ENCODE measurements at regions of chr10 and their contacts with region 1.

Region 1: GRCh38 chr10:78657163-78657861 is 411.5 kb upstream of the ZMIZ1 start:
- DNase-seq: peak; percentile 72 to 78 (median 74)
- ATAC-seq: peak; percentile 99
- H3K4me3 ChIP-seq: no peak overlapping the region
- H3K27ac ChIP-seq: no peak overlapping the region
- H3K4me1 ChIP-seq: peaks cover 0 to 5% of the 10 kb centered on the region in 2 experiments; a peak in 1 of 5 replicates
- H3K27me3 ChIP-seq: peaks cover 2 to 15% of the 10 kb centered on the region in 2 experiments; a peak in 3 of 5 replicates
- CTCF ChIP-seq: peak; percentile 79 to 81 (median 81)
- EP300 ChIP-seq: no peak
- POLR2A ChIP-seq: no peak
- RAD21 ChIP-seq: peak in 1 of 2 experiments; percentile 72; a peak in 2 of 4 replicates

Region 2: DNA sequence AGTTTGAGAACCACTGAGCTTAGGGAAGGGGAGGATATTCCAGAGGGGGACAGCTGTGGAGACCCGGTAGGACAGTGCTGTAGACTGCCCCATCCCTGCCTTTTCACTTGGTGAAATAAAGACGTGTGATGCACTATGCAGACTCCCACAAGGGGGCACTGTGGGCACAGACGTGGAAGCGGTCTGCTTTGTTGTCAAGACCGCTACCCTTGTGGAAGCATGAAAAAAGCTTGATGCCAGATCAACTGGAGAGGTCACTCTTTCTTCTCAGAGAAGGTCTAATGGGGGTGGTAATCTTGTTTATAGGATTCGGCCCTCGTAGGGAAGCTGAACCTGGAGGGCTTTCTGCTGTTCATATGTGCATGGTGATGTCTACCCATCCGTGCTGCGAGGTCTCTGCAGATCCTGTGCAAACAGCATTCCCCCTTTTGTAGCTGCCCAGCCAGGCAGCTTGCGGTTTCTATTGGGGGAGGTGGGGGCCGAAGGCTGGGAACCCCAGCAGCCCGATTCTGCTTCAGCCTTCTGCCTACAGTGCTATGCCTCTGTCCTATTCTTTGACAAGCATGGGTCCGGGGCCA is 609.9 kb before region 1 on chr10:
- CTCF ChIA-PET with region 1: no interaction called
- POLR2A ChIA-PET with region 1: no interaction called
- in situ Hi-C with region 1: no loop called
- intact Hi-C with region 1: loop called (anchors 5 kb)
- DNase-seq: peak; percentile 75 to 88 (median 77)
- ATAC-seq: peak; percentile 83
- H3K4me3 ChIP-seq: no peak overlapping the region
- H3K27ac ChIP-seq: no peak overlapping the region
- H3K4me1 ChIP-seq: peaks cover 0 to 17% of the 10 kb centered on the region in 2 experiments; a peak in 2 of 5 replicates
- H3K27me3 ChIP-seq: peaks cover 0 to under 1% of the 10 kb centered on the region in 2 experiments; a peak in 2 of 5 replicates
- CTCF ChIP-seq: peak; percentile 95 to 98 (median 95)
- EP300 ChIP-seq: no peak
- POLR2A ChIP-seq: no peak
- RAD21 ChIP-seq: peak; percentile 89 to 95

Region 3: DNA sequence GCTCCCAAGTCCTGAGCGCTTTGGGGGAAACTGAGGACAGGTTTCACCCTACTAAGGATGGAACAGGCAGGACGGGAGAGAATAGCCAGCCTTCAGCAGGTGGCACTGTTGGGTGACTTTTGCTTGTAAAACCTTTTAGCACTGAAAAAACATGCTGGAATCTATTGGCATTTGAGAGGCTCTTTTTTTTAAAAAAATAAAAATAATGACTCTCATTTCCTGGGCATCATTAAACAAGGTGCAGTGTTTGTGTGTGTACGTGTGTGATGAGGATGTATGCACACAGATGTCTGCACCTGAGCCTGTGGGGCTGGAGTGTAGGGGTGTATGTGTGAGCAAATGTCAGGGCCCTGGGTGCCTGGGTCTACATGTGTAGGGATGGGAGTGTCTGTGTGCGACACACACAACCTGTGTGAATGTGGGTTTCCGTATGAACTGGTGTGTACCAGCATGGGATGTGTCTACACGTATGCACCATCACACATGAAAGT is 445.7 kb before region 1 on chr10:
- CTCF ChIA-PET with region 1: no interaction called
- POLR2A ChIA-PET with region 1: no interaction called
- in situ Hi-C with region 1: no loop called
- intact Hi-C with region 1: loop called (anchors 10 kb)
- DNase-seq: peak in 1 of 4 experiments; percentile 23
- ATAC-seq: no peak
- H3K4me3 ChIP-seq: no peak overlapping the region
- H3K27ac ChIP-seq: no peak overlapping the region
- H3K4me1 ChIP-seq: no peaks in the 10 kb centered on the region
- H3K27me3 ChIP-seq: peaks cover 6 to 34% of the 10 kb centered on the region in 2 experiments; a peak in 3 of 5 replicates
- CTCF ChIP-seq: peak in 2 of 3 experiments; percentile 53 to 63; a peak in 4 of 6 replicates
- EP300 ChIP-seq: no peak
- POLR2A ChIP-seq: no peak
- RAD21 ChIP-seq: peak; percentile 69 to 70

Region 4: DNA sequence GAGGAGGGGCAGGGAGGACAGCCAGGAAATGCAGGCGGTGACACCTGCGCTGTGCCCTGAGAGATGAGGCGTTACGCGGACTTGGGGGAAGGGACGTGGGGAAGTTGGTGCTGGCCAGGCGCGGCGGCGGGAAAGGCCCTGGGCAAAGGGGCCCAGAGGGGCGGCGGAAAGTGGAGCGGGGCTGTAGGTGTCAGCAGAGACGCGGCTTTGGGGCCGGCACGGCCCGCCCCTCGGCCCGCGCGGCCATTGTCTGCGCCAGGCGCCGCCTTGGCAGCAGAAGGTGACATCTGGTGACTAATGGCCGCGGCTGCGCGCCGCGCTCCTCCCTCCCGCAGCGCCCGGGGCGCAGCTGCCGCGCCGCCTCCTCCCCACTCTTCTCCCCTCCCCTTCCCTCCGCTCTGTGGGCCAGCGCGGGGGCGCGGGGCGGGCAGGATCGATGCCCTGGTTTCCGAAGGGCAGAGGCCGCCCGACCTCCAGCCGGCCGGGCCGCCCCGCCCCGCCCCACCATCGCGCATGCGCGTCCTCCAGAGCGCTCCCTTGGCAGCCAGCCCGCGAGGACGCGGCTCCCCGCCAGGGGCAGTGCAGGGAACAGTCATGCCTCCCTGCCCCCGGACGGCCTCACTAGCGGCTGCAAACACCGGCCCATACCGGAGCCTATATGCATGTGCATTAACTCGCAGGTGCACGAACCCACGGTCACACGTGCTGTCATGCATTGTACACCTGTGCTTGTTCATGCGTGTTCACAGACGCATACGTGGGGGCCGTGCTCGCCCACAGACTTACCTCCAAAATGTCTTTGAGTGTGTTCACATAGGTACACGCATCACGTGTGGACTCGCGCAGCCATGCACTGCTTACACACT is 354.1 kb before region 1 on chr10:
- CTCF ChIA-PET with region 1: no interaction called
- POLR2A ChIA-PET with region 1: no interaction called
- in situ Hi-C with region 1: no loop called
- intact Hi-C with region 1: loop called (anchors 10 kb)
- DNase-seq: peak; percentile 95 to 100 (median 100)
- ATAC-seq: peak; percentile 97
- H3K4me3 ChIP-seq: peak overlapping the region; percentile 58
- H3K27ac ChIP-seq: peak overlapping the region; percentile 39; the same call in 2 of the 3 replicates
- H3K4me1 ChIP-seq: peaks cover 5 to 13% of the 10 kb centered on the region in 2 experiments; a peak in 4 of 5 replicates
- H3K27me3 ChIP-seq: peaks cover 6 to 26% of the 10 kb centered on the region in 2 experiments; a peak in 3 of 5 replicates
- CTCF ChIP-seq: peak; percentile 82 to 87 (median 85)
- EP300 ChIP-seq: no peak
- POLR2A ChIP-seq: peak; percentile 66
- RAD21 ChIP-seq: peak; percentile 52 to 53

Region 5: DNA sequence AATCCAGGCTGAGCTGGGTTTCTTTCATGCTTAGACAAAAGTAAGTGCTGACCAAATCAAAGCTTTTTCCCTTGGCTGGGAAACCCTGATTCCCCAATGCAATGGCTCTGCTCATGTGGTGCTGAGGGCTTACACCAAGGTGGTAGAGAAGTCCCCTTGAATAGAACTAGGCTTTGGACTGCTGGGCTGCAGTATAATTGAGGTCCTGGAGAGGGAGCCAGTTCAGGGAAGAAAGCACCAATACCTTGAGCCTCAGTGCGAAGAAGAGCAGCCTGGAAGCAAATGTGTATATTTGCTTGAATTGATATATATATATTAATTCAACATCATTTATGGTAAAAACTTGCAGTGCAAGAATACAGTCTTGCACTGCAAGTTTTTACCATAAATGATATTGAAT is 232.6 kb before region 1 on chr10:
- CTCF ChIA-PET with region 1: no interaction called
- POLR2A ChIA-PET with region 1: no interaction called
- in situ Hi-C with region 1: no loop called
- intact Hi-C with region 1: loop called (anchors 5 kb)
- DNase-seq: peak in 3 of 4 experiments; percentile 18 to 32 (median 28)
- ATAC-seq: peak; percentile 88
- H3K4me3 ChIP-seq: no peak overlapping the region
- H3K27ac ChIP-seq: no peak overlapping the region
- H3K4me1 ChIP-seq: no peaks in the 10 kb centered on the region
- H3K27me3 ChIP-seq: peaks cover 15 to 28% of the 10 kb centered on the region in 2 experiments; a peak in 4 of 5 replicates
- CTCF ChIP-seq: peak; percentile 38 to 60 (median 43); a peak in 5 of 6 replicates
- EP300 ChIP-seq: no peak
- POLR2A ChIP-seq: no peak
- RAD21 ChIP-seq: peak; percentile 24 to 48; a peak in 2 of 4 replicates

Measured in K562 (cell line).